ENCODE measurements at regions of chr17 and their contacts with region 1.

Region 1: GRCh38 chr17:21390294-21390693 is 14.1 kb downstream of the KCNJ12 start:
- DNase-seq: no peak
- H3K4me3 ChIP-seq: no peak overlapping the region
- H3K27ac ChIP-seq: no peak overlapping the region
- H3K4me1 ChIP-seq: no peaks in the 10 kb centered on the region
- H3K27me3 ChIP-seq: 0 out of 2 replicates have a peak, but pooled peaks cover 4% of the 10 kb centered on the region
- CTCF ChIP-seq: no peak

Region 2: DNA sequence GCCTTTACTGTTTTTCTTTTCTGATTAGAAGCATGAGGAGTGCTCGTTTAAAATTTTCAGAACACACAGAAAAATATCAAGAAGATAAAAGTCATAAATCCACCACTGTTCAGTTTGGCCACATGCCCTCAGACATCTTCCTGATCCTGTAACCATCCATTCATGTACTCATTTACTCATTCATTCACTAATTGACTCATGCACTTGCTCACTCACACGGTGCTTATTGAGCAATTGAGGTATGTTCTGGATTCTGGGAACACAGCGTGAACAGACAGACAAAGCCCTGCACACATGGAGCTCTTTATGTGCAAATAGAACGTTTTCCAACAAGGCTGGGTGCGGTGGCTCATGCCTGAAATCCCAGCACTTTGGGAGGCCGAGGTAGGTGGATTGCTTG is 126.9 kb before region 1 on chr17:
- CTCF ChIA-PET with region 1: no interaction called
- POLR2A ChIA-PET with region 1: interaction called, 11 read pairs
- intact Hi-C with region 1: no loop called
- DNase-seq: no peak
- H3K4me3 ChIP-seq: no peak overlapping the region
- H3K27ac ChIP-seq: no peak overlapping the region
- H3K4me1 ChIP-seq: no peaks in the 10 kb centered on the region
- H3K27me3 ChIP-seq: no peaks in the 10 kb centered on the region
- CTCF ChIP-seq: no peak

Region 3: GRCh38 chr17:21358707-21359482 is 31.4 kb before region 1 on chr17:
- CTCF ChIA-PET with region 1: no interaction called
- POLR2A ChIA-PET with region 1: no interaction called
- intact Hi-C with region 1: no loop called
- DNase-seq: peak; percentile 52 to 55
- H3K4me3 ChIP-seq: no peak overlapping the region
- H3K27ac ChIP-seq: no peak overlapping the region
- H3K4me1 ChIP-seq: peaks cover 10% of the 10 kb centered on the region
- H3K27me3 ChIP-seq: no peaks in the 10 kb centered on the region
- CTCF ChIP-seq: no peak